Right cardiac atrium (tissue), 5 donors: ENCODE measurements at regions of chr4 and their contacts with region 1.

Region 1: GRCh38 chr4:74370912-74371311 is 6.0 kb downstream of the EREG start:
- DNase-seq: no peak
- ATAC-seq: peak; percentile 64 to 78
- H3K4me3 ChIP-seq: no peak overlapping the region
- H3K27ac ChIP-seq: no peak overlapping the region
- H3K4me1 ChIP-seq: no peaks in the 10 kb centered on the region
- H3K27me3 ChIP-seq: no peaks in the 10 kb centered on the region

Region 2: GRCh38 chr4:74466242-74466641 is 95.3 kb after region 1 on chr4:
- intact Hi-C with region 1: no loop called
- DNase-seq: no peak
- ATAC-seq: no peak
- H3K4me3 ChIP-seq: no peak overlapping the region
- H3K27ac ChIP-seq: no peak overlapping the region
- H3K4me1 ChIP-seq: no peaks in the 10 kb centered on the region
- H3K27me3 ChIP-seq: no peaks in the 10 kb centered on the region

Region 3: DNA sequence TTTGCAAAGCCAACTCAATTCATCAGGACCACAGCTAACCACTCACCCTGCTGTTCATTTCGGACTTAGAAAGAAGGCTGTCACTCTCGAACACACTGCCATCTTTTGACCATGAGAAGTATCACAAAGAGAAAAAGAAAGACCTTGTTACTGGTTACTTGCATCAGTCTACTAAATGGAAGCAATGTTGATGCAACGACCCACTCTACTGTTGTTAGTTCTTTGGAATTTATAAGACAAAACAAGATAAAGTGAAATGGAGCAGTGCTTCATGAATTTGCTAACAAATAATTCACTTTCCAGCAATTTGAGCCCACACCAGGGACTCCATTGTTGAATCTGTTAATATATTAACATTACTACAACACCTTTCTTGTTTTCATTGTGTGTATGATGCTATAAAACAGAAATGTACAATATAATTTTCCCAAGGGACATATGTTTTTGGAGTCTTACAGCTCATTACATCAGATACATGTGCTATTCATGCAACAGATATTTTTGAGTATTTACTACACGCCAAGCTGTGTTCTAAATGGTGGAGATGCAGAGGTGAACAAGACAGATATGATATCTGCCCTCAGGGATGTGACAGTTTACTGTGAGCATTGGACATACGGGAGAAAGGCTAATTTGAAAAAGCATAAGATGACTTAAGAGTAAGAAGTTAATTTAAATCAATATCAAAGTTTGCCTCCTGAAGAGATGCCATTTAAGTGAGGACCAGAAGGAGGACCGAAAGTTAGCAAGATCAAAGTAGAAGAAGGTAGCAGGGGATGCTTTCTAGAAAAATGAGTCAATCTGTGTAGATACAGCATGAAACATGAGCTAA is 161.3 kb after region 1 on chr4:
- intact Hi-C with region 1: loop called (anchors 5 to 10 kb)
- DNase-seq: no peak
- ATAC-seq: peak; percentile 69 to 73
- H3K4me3 ChIP-seq: no peak overlapping the region
- H3K27ac ChIP-seq: no peak overlapping the region
- H3K4me1 ChIP-seq: no peaks in the 10 kb centered on the region
- H3K27me3 ChIP-seq: no peaks in the 10 kb centered on the region

Region 4: GRCh38 chr4:74623041-74623440 is 252.1 kb after region 1 on chr4:
- intact Hi-C with region 1: loop called in 2 of 4 experiments (anchors 5 to 10 kb)
- DNase-seq: no peak
- ATAC-seq: peak; percentile 49 to 56
- H3K4me3 ChIP-seq: no peak overlapping the region
- H3K27ac ChIP-seq: no peak overlapping the region
- H3K4me1 ChIP-seq: peaks cover 2% of the 10 kb centered on the region
- H3K27me3 ChIP-seq: no peaks in the 10 kb centered on the region

Region 5: DNA sequence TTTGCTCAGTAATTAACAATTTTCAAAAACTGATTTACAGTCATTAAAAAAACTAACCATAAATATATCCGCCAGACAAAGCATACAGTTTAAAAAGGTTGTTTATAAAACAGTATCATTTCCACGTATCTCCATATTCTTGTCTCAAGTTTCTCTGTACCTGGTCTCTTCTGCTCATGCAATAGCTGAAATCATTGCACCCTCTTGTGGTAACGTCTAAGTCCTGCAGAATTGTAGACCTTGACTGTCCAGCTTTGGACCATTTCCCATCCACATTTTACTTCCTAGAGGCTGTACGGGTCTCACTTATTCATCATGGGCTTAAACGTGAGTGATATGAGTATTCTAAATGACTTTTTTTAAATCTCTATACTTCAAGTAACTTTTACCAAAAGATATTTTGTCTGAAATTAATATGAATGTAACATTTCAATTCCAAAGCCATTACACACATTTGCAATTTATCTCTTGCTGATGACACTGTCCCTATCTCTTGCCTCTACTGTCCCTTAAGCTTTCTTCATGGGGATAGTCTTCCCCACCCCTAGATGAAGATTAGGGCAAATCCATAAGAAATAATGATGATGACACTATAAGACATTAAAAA is 304.9 kb after region 1 on chr4:
- intact Hi-C with region 1: loop called (anchors 5 to 10 kb)
- DNase-seq: no peak
- ATAC-seq: peak; percentile 59 to 63
- H3K4me3 ChIP-seq: no peak overlapping the region
- H3K27ac ChIP-seq: no peak overlapping the region
- H3K4me1 ChIP-seq: no peaks in the 10 kb centered on the region
- H3K27me3 ChIP-seq: no peaks in the 10 kb centered on the region